AG04449 (cell line): ENCODE measurements at regions of chr15 and their contacts with region 1.

Region 1: DNA sequence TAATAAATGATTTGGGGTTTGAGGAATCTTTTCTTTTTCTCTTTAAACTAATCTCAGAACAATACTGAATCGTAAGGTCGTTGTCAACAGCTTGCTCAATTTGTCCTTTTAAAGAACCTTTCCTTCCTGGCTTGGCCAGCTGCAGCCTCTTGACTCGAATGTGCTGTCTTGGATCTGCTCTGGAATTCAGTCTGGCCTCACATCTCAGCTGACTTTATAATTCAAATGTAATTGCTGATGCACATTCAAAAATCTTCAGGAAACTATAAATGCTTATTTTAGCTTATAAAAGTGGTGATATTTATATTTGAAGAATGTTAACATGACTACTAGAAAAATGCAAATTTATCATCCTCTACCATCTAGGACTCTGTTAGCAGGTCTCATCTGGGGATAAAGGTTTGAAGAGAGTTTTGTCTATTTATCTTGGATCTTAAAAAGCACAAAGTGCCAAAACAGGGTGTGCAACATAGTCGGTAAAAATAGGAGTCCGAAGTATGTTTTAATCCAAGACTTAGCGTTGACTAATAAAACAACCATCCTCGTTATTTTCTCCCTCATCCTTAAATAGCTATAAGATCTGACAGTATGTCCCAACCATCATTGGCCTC is 1035.2 kb downstream of the MCTP2 start:
- DNase-seq: peak; percentile 56
- H3K4me3 ChIP-seq: no peak overlapping the region
- CTCF ChIP-seq: no peak

Region 2: GRCh38 chr15:95277266-95277665 is 10.7 kb after region 1 on chr15:
- CTCF ChIA-PET with region 1: interaction called, 4 read pairs
- POLR2A ChIA-PET with region 1: interaction called, 12 read pairs
- DNase-seq: peak; percentile 86
- H3K4me3 ChIP-seq: no peak overlapping the region
- CTCF ChIP-seq: no peak